Left cardiac atrium (tissue), 4 donors: ENCODE measurements at regions of chr10 and their contacts with region 1.

Region 1: GRCh38 chr10:91758303-91759146 is 39.7 kb upstream of the TNKS2 start:
- DNase-seq: no peak
- ATAC-seq: peak; percentile 47 to 55

Region 2: GRCh38 chr10:91864099-91864498 is 105.6 kb after region 1 on chr10:
- intact Hi-C with region 1: no loop called
- DNase-seq: no peak
- ATAC-seq: no peak

Region 3: DNA sequence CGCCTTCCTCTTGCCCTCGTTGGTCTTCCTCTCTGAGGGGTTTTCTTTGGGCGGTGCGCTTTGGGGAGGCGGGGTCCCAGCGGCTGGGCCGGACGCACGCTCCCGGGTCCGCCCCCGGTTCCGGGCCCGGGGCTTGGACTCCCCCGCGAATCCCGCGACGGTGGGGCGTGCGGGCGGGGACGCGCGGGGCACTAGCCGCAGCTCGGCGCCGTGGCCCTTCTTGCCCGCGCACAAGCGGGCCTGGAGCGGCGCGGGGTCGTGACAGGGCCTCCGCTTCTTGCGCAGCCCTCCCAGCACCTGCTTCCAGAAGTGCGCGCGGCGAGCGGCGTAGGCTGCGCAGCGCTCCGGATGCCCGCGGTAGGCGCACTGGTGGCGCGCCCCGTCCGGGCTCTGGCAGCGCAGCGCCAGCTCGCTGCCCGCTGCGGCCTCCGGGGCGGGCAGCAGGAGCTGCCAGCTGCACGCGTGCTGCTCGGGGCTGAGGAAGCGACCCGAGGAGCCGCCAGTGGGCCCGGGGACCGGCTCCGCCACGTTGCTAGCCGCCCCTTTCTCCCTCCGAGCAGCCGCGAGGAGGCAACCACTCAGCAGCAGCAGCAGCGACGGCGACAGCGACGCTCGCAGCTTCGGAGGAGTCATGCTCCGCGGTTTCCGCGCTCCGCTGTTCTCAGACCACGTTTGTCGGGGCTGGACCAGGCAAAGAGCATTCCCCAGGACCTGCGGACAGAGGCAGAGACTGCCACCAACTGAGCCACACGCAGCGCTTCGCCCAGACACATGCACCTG is 150.0 kb after region 1 on chr10:
- intact Hi-C with region 1: loop called (anchors 2 to 5 kb)
- DNase-seq: peak; percentile 84
- ATAC-seq: peak; percentile 96

Region 4: GRCh38 chr10:92432596-92432995 is 674.1 kb after region 1 on chr10:
- intact Hi-C with region 1: loop called in 1 of 2 experiments (anchors 10 kb)
- DNase-seq: no peak
- ATAC-seq: no peak